GM12878 (cell line): ENCODE measurements at regions of chr6 and their contacts with region 1.

Region 1: DNA sequence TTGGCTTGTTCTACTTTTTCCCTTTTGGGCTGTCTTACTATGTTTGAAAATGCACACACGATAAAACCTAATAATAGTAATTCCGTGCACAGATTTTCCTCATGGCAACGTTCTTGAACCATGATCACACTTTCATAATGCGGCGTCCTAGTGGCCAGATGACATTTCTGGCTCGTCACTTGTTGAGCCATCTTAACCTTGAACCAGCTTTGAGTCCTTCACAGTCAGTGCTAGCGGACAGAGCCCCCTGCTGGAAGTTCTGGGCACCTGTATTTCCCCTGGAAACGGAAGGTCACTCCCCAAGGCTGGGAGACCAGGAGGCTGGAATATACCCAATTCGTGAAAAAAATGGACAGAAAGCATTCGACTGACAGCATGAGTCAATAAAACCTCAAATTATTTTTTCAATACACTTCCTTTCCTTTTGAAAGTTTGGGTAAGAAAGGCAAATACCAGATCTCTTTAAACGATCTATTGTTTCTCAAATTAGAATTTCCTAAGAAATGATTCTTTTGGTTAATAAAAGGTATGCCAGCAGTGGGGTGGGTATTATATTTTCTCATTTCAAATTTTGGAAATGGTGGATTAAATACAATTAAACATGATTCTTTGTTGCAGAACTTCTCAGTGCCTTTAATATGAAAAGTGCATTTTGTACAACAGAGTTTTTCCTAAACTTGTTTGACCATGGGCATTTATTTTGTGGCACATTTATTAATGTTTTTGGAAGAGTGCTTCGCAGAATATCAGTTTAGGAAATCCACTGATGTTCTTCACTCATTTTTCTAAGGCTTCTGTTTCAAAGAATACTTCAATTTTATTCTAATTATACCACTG is 542.3 kb downstream of the QKI start:
- DNase-seq: peak; percentile 34
- ATAC-seq: peak; percentile 99
- H3K4me3 ChIP-seq: no peak overlapping the region
- H3K27ac ChIP-seq: no peak overlapping the region
- H3K4me1 ChIP-seq: no peaks in the 10 kb centered on the region
- H3K27me3 ChIP-seq: no peaks in the 10 kb centered on the region
- CTCF ChIP-seq: peak; percentile 91 to 95 (median 91); a peak in 5 of 6 replicates
- EP300 ChIP-seq: no peak
- POLR2A ChIP-seq: no peak
- RAD21 ChIP-seq: peak; percentile 97

Region 2: DNA sequence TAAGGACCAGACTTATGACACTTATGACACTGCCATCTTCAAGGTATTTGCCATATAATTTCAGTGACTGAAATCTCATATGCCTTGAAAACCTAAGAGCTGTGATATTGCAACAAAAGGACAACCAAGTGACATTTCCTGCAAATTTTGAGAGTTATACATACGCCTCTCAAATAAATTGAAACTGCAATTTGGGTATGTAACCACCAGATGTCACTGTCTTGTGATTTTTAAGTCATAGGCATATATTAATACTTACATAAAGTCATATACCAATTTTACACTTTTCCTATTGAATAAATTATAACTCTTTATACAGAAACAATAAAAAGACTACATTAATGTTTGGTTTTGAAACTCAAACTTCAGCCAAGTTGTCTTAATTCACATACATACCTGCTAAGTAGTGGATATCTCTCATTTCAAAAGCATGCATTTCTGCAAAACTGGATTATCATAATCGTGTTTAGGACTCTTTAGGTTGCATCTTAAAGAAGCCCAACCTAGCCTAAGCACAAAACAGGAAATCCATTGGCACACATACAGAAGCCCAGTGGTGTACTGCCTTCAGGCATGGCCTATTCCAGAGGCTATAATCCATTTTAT is 1048.8 kb before region 1 on chr6:
- CTCF ChIA-PET with region 1: interaction called, 3 read pairs
- POLR2A ChIA-PET with region 1: no interaction called
- RAD21 ChIA-PET with region 1: no interaction called
- SMC1A ChIA-PET with region 1: no interaction called
- in situ Hi-C with region 1: no loop called
- intact Hi-C with region 1: loop called (anchors 1 kb)
- DNase-seq: no peak
- ATAC-seq: 0 out of 3 replicates have a peak, but pooled peaks have one; percentile 43
- H3K4me3 ChIP-seq: no peak overlapping the region
- H3K27ac ChIP-seq: no peak overlapping the region
- H3K4me1 ChIP-seq: no peaks in the 10 kb centered on the region
- H3K27me3 ChIP-seq: no peaks in the 10 kb centered on the region
- CTCF ChIP-seq: peak; percentile 30 to 45 (median 39); a peak in 4 of 6 replicates
- EP300 ChIP-seq: no peak
- POLR2A ChIP-seq: no peak
- RAD21 ChIP-seq: 0 out of 2 replicates have a peak, but pooled peaks have one; percentile 34

Region 3: DNA sequence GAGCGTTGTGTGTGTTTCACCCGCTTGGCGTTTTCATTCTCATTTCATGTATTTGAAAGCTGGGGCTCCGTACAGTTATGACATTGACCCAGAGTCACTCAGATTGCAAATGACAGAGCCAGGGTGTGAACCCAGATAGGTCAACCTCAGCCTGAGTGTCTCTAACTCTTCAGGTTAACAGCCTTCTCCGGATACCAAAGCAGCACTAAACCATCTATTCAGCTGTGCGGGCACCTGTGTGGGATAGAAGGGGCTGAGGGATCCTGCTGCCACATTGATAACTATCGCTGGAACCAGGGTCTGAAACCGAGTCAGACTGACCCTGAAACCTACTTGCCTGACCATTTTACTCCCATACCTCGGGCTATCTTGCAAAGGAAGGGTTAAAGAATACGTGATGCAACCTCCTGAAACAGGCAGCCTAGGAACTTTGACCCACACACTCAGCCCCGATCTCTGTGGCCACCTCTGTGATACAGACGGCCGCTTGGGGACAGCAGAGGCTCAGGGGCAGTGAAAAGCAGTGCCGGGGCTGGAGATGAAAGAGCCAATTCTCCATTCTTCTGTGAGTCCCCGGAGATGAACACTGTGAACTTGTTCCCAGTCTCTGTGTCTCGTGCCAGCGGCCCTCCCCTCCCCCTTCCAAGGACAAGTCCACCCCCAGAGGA is 775.8 kb before region 1 on chr6:
- CTCF ChIA-PET with region 1: no interaction called
- POLR2A ChIA-PET with region 1: no interaction called
- RAD21 ChIA-PET with region 1: no interaction called
- SMC1A ChIA-PET with region 1: no interaction called
- in situ Hi-C with region 1: loop called (anchors 10 kb)
- intact Hi-C with region 1: loop called (anchors 5 kb)
- DNase-seq: no peak
- ATAC-seq: peak; percentile 67
- H3K4me3 ChIP-seq: no peak overlapping the region
- H3K27ac ChIP-seq: no peak overlapping the region
- H3K4me1 ChIP-seq: no peaks in the 10 kb centered on the region
- H3K27me3 ChIP-seq: peaks cover 0 to 2% of the 10 kb centered on the region in 2 experiments; a peak in 2 of 4 replicates
- CTCF ChIP-seq: peak; percentile 36 to 57 (median 44); a peak in 4 of 6 replicates
- EP300 ChIP-seq: no peak
- POLR2A ChIP-seq: no peak
- RAD21 ChIP-seq: peak; percentile 66

Region 4: DNA sequence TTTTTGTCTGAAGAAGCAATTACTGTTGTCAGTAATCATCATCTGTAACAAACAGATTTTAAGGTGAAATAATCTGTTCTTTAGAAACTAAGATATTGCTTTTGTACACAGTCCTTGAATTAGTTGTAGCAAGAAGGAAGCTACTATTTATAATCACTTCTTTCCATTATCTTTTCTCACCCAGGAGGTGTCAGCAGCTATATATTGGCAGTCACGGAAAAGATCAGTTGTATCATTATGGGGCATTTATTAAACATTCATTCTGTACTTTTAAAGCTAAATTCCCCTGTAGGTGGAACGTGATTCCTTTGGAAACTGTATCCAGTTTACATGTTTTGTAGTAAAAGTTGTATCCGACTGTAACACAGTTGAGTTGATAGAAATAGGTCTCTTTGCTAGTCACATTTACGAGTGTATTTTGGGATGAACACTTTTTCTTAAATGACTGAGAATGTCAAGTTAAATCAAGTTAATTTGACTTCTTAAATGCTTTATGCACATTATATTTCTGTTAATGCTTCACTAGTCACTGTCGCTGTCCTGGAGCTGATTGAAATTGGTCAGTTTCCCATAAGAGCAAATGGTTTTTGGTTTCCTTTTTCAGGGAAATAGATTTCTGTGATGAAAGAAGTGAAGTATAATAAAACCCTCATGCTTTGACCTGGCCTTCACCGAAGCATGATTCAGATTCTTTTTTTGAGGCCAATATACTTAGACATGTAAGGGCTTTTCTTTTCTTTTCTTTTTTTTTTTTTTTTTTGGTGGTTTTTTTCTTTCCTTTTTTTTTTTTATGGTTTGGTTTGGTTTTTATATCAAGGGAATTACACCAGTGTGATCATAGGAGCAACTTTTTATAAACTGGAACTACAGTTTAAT is 537.1 kb before region 1 on chr6:
- CTCF ChIA-PET with region 1: interaction called, 3 read pairs
- POLR2A ChIA-PET with region 1: no interaction called
- RAD21 ChIA-PET with region 1: interaction called, 3 read pairs
- SMC1A ChIA-PET with region 1: interaction called, 3 read pairs
- in situ Hi-C with region 1: loop called (anchors 5 kb)
- intact Hi-C with region 1: loop called (anchors 1 kb)
- DNase-seq: no peak
- ATAC-seq: peak; percentile 7; the same call in 1 of the 3 replicates
- H3K4me3 ChIP-seq: peak overlapping the region; percentile 61
- H3K27ac ChIP-seq: no peak overlapping the region
- H3K4me1 ChIP-seq: peaks cover 3% of the 10 kb centered on the region; the same call in 1 of the 2 replicates
- H3K27me3 ChIP-seq: no peaks in the 10 kb centered on the region
- CTCF ChIP-seq: no peak
- EP300 ChIP-seq: no peak
- POLR2A ChIP-seq: no peak
- RAD21 ChIP-seq: no peak

Region 5: DNA sequence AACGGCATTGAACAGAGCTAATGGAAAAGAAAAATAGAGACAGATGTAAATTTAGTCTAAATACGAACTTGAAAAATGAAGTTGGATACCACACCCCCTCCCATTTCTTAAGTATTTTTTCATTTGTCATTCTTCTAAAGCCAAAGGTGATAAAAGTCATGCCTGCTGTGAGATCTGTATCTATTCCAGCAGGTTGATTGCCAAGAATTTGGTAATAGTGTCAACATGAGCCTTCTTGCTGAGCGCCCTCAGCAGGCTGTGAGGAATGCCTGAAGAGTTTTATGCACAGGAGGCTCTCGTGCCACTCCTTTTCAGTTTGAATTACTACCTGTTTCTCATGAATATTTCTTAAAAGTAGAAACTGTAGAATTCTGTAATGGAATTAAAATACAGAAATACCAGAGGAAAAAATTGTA is 376.9 kb before region 1 on chr6:
- CTCF ChIA-PET with region 1: no interaction called
- POLR2A ChIA-PET with region 1: no interaction called
- RAD21 ChIA-PET with region 1: no interaction called
- SMC1A ChIA-PET with region 1: no interaction called
- in situ Hi-C with region 1: no loop called
- intact Hi-C with region 1: loop called (anchors 5 kb)
- DNase-seq: no peak
- ATAC-seq: no peak
- H3K4me3 ChIP-seq: no peak overlapping the region
- H3K27ac ChIP-seq: no peak overlapping the region
- H3K4me1 ChIP-seq: no peaks in the 10 kb centered on the region
- H3K27me3 ChIP-seq: no peaks in the 10 kb centered on the region
- CTCF ChIP-seq: no peak
- EP300 ChIP-seq: no peak
- POLR2A ChIP-seq: no peak
- RAD21 ChIP-seq: no peak

Region 6: GRCh38 chr6:163707401-163708355 is 249.1 kb before region 1 on chr6:
- CTCF ChIA-PET with region 1: no interaction called
- POLR2A ChIA-PET with region 1: no interaction called
- RAD21 ChIA-PET with region 1: no interaction called
- SMC1A ChIA-PET with region 1: interaction called, 3 read pairs
- in situ Hi-C with region 1: no loop called
- intact Hi-C with region 1: loop called (anchors 5 kb)
- DNase-seq: no peak
- ATAC-seq: peak; percentile 71
- H3K4me3 ChIP-seq: peak overlapping the region; percentile 42; the same call in 1 of the 2 replicates
- H3K27ac ChIP-seq: peak overlapping the region; percentile 68
- H3K4me1 ChIP-seq: peaks cover 95% of the 10 kb centered on the region
- H3K27me3 ChIP-seq: no peaks in the 10 kb centered on the region
- CTCF ChIP-seq: peak; percentile 5 to 60 (median 55); a peak in 3 of 6 replicates
- EP300 ChIP-seq: no peak
- POLR2A ChIP-seq: no peak
- RAD21 ChIP-seq: peak; percentile 50